Activated CD4-positive, alpha-beta T cell treated with anti-CD3 and anti-CD28 coated beads for 36 hours (primary cell): ENCODE measurements at regions of chr16 and their contacts with region 1.

Region 1: GRCh38 chr16:49528060-49528865 is 154.7 kb downstream of the C16orf78 start:
- DNase-seq: peak; percentile 66
- ATAC-seq: peak; percentile 85
- H3K4me3 Mint-ChIP-seq: peak overlapping the region; percentile 71
- H3K27ac Mint-ChIP-seq: peak overlapping the region; percentile 88
- H3K4me1 Mint-ChIP-seq: peaks cover 12% of the 10 kb centered on the region
- H3K27me3 Mint-ChIP-seq: no peaks in the 10 kb centered on the region

Region 2: DNA sequence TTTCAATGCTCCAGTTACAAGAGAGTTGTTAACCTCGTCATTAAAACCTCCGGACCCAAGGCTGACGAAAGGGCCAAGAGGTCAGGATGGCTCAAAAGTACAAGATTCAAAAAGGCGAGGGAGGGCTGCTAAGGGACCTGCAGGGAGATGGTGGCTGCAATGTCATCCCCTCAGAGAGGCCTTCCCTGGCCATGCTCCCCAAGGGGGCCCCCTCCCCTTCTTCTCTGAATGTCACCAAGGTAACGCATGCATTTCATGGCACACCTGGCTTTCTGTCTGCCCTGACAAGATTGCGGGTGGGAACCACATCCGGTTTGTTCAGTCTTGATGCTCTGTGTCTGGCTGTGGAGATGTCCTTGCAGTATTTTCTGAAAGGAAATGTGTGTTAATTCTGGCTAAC is 64.7 kb before region 1 on chr16:
- CTCF ChIA-PET with region 1: no interaction called
- POLR2A ChIA-PET with region 1: no interaction called
- intact Hi-C with region 1: loop called in 1 of 2 experiments (anchors 2 kb)
- DNase-seq: peak; percentile 86
- ATAC-seq: peak; percentile 84
- H3K4me3 Mint-ChIP-seq: peak overlapping the region; percentile 46
- H3K27ac Mint-ChIP-seq: peak overlapping the region; percentile 83
- H3K4me1 Mint-ChIP-seq: peaks cover 44% of the 10 kb centered on the region
- H3K27me3 Mint-ChIP-seq: no peaks in the 10 kb centered on the region